Heart right ventricle (tissue), 16 donors: ENCODE measurements at regions of chr7 and their contacts with region 1.

Region 1: GRCh38 chr7:140653319-140654108 is 12.9 kb upstream of the DENND2A start:
- DNase-seq: peak; percentile 29 to 76
- ATAC-seq: peak; percentile 55 to 75 (median 68)
- H3K4me3 ChIP-seq: no peak overlapping the region
- H3K27ac ChIP-seq: no peak overlapping the region
- H3K4me1 ChIP-seq: peaks cover 0 to 45% (median 24%) of the 10 kb centered on the region in 9 donors
- H3K27me3 ChIP-seq: no peaks in the 10 kb centered on the region
- CTCF ChIP-seq: peak; percentile 85 to 96 (median 92)

Region 2: DNA sequence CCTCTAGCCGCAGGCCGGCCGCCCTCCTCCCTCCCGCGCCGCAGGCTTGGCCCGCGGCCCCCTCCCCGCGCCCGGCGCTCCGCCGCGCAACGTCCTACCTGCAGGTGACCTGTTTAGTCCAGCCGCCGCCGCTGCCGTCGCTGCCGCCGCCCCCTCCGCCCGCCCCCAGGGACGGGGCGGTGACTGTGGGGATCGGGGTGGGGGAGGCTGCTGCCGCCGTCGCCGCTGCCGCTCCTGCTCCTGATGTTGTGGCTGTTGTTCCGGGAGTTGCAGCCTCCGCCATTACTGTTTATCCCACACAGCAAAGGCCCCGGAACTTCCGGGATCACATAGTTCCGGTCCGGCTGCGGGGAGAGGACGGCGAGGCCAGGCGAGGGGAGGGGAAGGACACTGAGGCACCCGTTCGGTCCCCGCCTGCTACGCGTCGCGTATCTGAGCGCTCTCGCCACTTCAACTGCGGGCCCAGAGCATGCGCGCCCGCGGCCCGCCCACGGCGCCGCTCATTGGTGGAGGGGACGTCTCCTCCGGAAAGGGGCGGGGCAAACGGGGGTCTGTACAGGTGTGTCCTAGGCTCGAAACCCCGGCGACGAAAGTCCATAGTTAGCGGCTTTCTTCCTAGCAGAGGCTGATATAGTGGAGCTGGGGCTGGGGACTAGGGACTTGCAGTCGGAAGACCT is 174.3 kb before region 1 on chr7 and contains the start of gene MKRN1:
- intact Hi-C with region 1: loop called in 8 of 10 experiments (anchors 2 to 5 kb)
- DNase-seq: peak; percentile 93 to 94
- ATAC-seq: peak; percentile 96 to 99 (median 99)
- H3K4me3 ChIP-seq: peak within 1 kb of the TSS; percentile 69 to 99 (median 96)
- H3K27ac ChIP-seq: peak within 1 kb of the TSS; percentile 16 to 94 (median 90)
- H3K4me1 ChIP-seq: peaks cover 4 to 38% (median 27%) of the 10 kb centered on the region in 9 donors
- H3K27me3 ChIP-seq: no peaks in the 10 kb centered on the region
- CTCF ChIP-seq: peak in 1 of 9 donors; percentile 11
- total RNA-seq, gene MKRN1: 80.6 to 113 (median 92.0) TPM

Region 3: DNA sequence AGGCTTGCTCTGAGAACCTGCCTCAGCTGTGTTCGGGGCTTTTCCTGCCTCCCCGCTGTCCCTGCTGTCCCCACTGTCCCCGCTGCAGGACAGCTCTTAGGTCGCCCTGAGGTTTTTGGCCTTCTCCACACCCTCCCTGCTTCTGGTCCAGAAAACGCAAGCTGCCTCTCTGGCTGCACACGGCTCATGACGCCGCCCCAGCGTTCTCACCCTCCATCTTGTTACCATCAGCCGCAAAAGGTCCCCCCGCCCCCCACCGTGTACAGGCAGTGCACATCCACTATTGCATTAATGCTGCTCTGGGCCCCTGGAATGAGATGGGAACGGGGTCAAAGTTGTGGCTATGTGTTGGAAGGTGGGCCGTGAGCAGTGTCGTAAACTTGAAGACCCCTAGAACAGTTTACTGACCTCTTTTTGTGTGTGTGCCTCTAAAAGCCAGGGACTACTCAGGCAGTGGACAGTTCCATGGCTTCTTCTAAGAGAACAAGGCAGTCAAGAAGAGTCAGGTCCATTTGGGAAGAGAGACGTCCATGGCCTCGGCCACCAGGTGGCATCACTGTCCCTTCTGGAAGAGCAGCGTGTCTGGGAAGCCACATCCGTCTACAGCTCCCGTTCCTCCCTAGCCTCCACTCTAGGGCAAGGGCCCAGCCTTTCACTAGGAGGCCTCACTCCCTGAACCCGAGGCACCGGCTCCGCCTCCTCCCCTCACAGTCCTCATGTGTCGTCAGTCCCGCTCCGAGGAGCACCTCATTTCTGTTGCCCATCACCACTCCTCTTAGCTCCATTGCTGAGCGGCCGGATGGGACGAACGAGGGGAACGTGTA is 135.8 kb before region 1 on chr7:
- intact Hi-C with region 1: loop called (anchors 1 to 2 kb)
- DNase-seq: peak; percentile 90 to 91
- ATAC-seq: peak; percentile 86 to 96 (median 94)
- H3K4me3 ChIP-seq: peak overlapping the region in 1 of 10 donors; percentile 6
- H3K27ac ChIP-seq: peak overlapping the region in 7 of 10 donors; percentile 26 to 76 (median 48)
- H3K4me1 ChIP-seq: peaks cover 6 to 22% (median 16%) of the 10 kb centered on the region in 9 donors
- H3K27me3 ChIP-seq: no peaks in the 10 kb centered on the region
- CTCF ChIP-seq: peak; percentile 81 to 93 (median 88)

Region 4: DNA sequence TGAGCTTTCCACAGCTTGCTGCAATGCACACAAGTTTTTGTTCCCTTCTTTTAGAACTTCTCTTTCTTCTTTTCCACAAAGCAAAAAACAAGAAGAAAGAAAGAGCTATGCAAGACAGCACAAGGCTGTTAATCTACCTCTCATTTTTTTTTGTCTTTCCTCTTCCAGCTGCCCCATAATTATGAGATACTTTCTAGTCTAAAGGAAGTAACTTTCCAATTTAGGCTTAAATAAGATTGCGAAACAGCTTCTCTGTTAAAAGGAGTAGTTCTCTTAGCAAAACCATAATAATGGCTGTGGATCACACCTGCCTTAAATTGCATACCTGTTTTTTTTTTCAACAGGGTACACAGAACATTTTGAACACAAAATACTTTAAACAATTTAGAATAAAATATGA is 99.0 kb after region 1 on chr7:
- intact Hi-C with region 1: no loop called
- DNase-seq: no peak
- ATAC-seq: no peak
- H3K4me3 ChIP-seq: no peak overlapping the region
- H3K27ac ChIP-seq: no peak overlapping the region
- H3K4me1 ChIP-seq: no peaks in the 10 kb centered on the region
- H3K27me3 ChIP-seq: no peaks in the 10 kb centered on the region
- CTCF ChIP-seq: no peak

Region 5: GRCh38 chr7:140881507-140882228 is 228.2 kb after region 1 on chr7:
- intact Hi-C with region 1: no loop called
- DNase-seq: no peak
- ATAC-seq: no peak
- H3K4me3 ChIP-seq: no peak overlapping the region
- H3K27ac ChIP-seq: no peak overlapping the region
- H3K4me1 ChIP-seq: peaks cover 0 to 31% (median 23%) of the 10 kb centered on the region in 9 donors
- H3K27me3 ChIP-seq: no peaks in the 10 kb centered on the region
- CTCF ChIP-seq: no peak